OCI-LY7 (cell line): ENCODE measurements at regions of chr1 and their contacts with region 1.

Region 1: DNA sequence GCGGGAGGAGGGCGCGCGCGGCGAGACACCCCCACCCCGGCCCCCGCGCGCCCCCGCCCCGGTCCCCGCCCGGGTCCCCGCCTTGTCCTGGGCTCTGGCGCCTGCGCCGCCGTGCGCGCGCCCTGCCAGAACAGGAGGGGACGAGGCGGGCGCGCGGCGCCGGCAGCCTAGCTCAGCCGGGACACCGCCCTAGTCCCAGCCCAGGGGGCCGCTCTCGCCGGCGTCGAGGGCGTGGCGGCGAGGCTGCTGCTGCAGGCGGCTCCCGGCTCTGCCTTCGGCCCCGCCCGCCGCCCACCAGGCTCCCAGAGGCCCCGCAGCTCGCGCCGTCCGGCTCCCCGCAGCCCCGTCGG is at the start of gene RCAN3:
- DNase-seq: peak; percentile 94
- H3K4me3 ChIP-seq: peak within 1 kb of the TSS; percentile 84
- H3K27ac ChIP-seq: peak within 1 kb of the TSS; percentile 72
- H3K4me1 ChIP-seq: peaks cover 59% of the 10 kb centered on the region
- CTCF ChIP-seq: no peak
- total RNA-seq, gene RCAN3: 13.0 and 22.9 TPM in 2 replicates

Region 2: GRCh38 chr1:24415334-24415909 is 87.3 kb before region 1 on chr1 and contains the start of gene NIPAL3:
- CTCF ChIA-PET with region 1: interaction called, 5 read pairs
- POLR2A ChIA-PET with region 1: interaction called, 8 read pairs
- intact Hi-C with region 1: loop called (anchors 1 kb)
- DNase-seq: peak; percentile 100
- H3K4me3 ChIP-seq: peak within 1 kb of the TSS; percentile 79
- H3K27ac ChIP-seq: no peak within 1 kb of the TSS
- H3K4me1 ChIP-seq: peaks cover 34% of the 10 kb centered on the region
- CTCF ChIP-seq: peak; percentile 75
- total RNA-seq, gene NIPAL3: 6.7 and 11.7 TPM in 2 replicates

Region 3: DNA sequence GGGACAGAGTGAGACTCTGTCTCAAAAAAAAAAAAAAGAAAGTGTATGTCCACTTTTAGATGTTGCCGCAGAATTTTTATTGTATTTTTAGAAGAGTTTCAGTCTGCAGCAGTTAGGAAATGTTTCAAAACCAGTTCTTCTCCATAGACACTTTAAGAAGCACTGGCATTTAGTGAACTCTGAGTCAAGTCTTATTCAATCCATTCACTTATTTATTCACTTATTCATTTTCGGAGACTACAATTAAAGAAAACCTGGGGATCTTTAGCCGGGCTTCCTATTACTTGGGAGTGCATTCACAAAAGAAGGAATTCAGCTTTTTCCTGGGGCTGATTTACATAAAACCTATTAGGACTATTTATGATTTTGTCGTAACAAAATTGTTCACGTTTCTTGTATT is 12.3 kb after region 1 on chr1:
- CTCF ChIA-PET with region 1: no interaction called
- POLR2A ChIA-PET with region 1: interaction called, 29 read pairs
- intact Hi-C with region 1: no loop called
- DNase-seq: no peak
- H3K4me3 ChIP-seq: no peak overlapping the region
- H3K27ac ChIP-seq: no peak overlapping the region
- H3K4me1 ChIP-seq: peaks cover 8% of the 10 kb centered on the region
- CTCF ChIP-seq: no peak

Region 4: GRCh38 chr1:24536391-24536840 is 33.7 kb after region 1 on chr1:
- CTCF ChIA-PET with region 1: interaction called, 3 read pairs
- POLR2A ChIA-PET with region 1: interaction called, 21 read pairs
- intact Hi-C with region 1: loop called (anchors 2 kb)
- DNase-seq: peak; percentile 87
- H3K4me3 ChIP-seq: peak overlapping the region; percentile 65
- H3K27ac ChIP-seq: peak overlapping the region; percentile 89
- H3K4me1 ChIP-seq: peaks cover 82% of the 10 kb centered on the region
- CTCF ChIP-seq: no peak

Region 5: DNA sequence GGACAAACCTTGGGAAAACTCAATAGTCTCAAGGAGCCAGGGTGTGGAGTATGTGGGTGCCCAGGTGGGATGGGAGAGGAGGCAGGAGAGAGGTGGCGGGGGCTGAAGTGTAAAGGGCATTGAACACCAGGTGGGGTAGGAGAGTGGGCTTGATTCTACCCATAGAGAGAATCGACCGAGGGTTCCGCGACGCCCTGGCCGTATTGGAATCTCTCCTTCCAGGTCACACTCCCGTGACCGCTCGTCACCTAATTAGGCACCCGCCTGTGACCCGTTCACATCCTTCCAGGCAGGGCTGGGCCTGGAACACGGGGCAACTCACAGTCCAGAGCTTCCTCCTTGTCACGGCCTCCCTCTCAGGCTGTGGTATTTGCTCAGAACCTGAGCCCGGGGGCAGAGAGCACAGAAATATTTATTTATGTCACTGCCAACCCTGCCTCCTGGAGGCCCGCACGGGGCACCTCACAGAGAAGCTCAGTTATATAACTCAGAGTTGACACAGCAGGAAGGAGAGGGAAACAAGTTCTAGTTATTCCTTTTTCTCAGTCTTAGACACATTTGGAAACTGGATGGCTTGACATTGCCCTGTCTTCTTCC is 65.2 kb after region 1 on chr1:
- CTCF ChIA-PET with region 1: no interaction called
- POLR2A ChIA-PET with region 1: no interaction called
- intact Hi-C with region 1: no loop called
- DNase-seq: no peak
- H3K4me3 ChIP-seq: no peak overlapping the region
- H3K27ac ChIP-seq: no peak overlapping the region
- H3K4me1 ChIP-seq: peaks cover 39% of the 10 kb centered on the region
- CTCF ChIP-seq: 0 out of 2 replicates have a peak, but pooled peaks have one; percentile 19

Region 6: DNA sequence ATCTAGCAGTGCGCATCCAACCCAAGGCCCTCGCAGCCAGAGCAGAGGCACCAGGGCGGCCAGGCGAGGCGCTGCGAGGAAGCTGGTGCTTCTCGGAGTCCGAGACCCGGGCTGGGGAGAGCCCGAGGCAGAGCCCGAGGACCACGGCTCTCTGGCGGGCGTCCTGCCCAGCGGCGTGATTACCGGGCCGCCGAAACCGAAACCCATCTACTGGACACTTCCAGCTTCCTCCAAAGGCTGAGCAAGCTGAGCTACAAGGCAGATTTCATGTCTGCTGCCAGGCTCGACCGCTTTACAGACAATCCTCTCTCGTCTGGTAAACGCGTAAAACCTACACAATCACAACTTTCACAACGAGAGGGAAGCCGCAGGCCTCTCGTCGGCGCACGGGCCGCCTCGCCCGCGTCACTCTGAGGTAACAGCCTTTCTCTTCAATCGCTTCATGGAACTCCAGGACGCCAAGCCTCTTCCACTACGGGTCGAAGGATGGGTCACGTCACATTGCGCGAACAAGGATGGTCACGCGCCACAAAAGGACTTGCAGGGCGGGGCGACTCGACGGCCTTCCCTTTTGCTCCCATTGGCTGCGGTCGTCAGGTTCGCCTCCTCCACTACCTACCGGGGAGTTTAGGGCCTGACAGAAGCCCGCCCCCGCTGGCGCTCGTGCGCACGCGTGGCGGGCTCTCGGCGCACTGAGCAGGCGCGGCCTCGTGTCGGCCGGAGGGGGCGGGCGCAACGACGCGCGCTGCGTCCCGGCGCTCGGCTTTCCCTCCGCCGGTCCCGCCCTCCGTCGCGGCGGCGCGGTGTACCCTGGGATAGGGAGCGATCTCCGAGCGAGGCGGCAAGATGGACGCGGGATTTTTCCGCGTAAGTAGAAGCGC is 140.0 kb after region 1 on chr1 and contains the start of gene SRRM1:
- CTCF ChIA-PET with region 1: no interaction called
- POLR2A ChIA-PET with region 1: interaction called, 4 read pairs
- intact Hi-C with region 1: loop called (anchors 2 kb)
- DNase-seq: peak; percentile 99
- H3K4me3 ChIP-seq: peak within 1 kb of the TSS; percentile 83
- H3K27ac ChIP-seq: peak within 1 kb of the TSS; percentile 82
- H3K4me1 ChIP-seq: peaks cover 22% of the 10 kb centered on the region
- CTCF ChIP-seq: peak; percentile 51
- total RNA-seq, gene SRRM1: 72.5 and 78.5 TPM in 2 replicates